MCF 10A (cell line): ENCODE measurements at regions of chr14 and their contacts with region 1.

Region 1: GRCh38 chr14:63388763-63389431 is 70.2 kb upstream of the GPHB5 start:
- DNase-seq: peak; percentile 66
- H3K4me3 Mint-ChIP-seq: no peak overlapping the region
- H3K27ac Mint-ChIP-seq: no peak overlapping the region
- H3K4me1 Mint-ChIP-seq: no peaks in the 10 kb centered on the region
- H3K27me3 Mint-ChIP-seq: no peaks in the 10 kb centered on the region
- CTCF ChIP-seq: peak; percentile 76

Region 2: GRCh38 chr14:63401646-63402045 is 12.7 kb after region 1 on chr14:
- CTCF ChIA-PET with region 1: interaction called, 10 read pairs
- POLR2A ChIA-PET with region 1: interaction called, 4 read pairs
- intact Hi-C with region 1: no loop called
- DNase-seq: no peak
- H3K4me3 Mint-ChIP-seq: no peak overlapping the region
- H3K27ac Mint-ChIP-seq: no peak overlapping the region
- H3K4me1 Mint-ChIP-seq: peaks cover 5% of the 10 kb centered on the region
- H3K27me3 Mint-ChIP-seq: no peaks in the 10 kb centered on the region
- CTCF ChIP-seq: no peak

Region 3: GRCh38 chr14:63632932-63633514 is 244.1 kb after region 1 on chr14:
- CTCF ChIA-PET with region 1: interaction called, 17 read pairs
- POLR2A ChIA-PET with region 1: no interaction called
- intact Hi-C with region 1: loop called (anchors 2 kb)
- DNase-seq: peak; percentile 44
- H3K4me3 Mint-ChIP-seq: no peak overlapping the region
- H3K27ac Mint-ChIP-seq: no peak overlapping the region
- H3K4me1 Mint-ChIP-seq: peaks cover 10% of the 10 kb centered on the region
- H3K27me3 Mint-ChIP-seq: no peaks in the 10 kb centered on the region
- CTCF ChIP-seq: peak; percentile 46